ENCODE measurements at regions of chr5 and their contacts with region 1.

Region 1: DNA sequence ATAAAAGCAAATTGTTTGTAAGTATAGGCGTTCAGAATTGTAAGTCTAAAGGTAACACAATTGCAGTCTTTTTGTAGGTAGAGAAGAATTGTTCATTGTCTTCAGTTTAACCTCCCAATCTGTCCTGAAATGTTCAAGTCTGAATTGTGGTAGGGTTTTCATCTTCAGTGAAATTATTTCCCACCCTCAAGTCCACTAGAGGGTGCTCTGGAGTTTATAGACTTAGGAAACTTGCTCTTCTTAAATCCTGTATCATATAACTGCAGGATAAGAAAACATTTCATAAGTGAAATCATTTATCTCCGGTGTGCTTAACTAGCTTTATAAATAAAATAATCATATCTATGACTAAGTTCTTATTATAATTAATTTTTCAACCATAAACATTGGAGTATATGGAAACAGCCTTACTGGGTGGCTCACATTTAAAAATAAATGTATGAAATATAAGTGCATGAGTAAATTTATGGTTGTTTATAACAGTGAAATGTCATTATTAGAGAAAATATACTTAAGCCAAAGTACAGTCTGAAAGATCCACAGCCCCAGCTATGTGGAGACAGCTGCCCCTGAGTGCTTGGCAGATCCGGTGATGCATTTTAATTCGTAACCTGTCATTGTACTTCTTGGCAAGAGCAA is 182.4 kb upstream of the OTULINL start:
- DNase-seq: no peak
- H3K4me3 ChIP-seq: no peak overlapping the region
- H3K27ac ChIP-seq: peak overlapping the region; percentile 43
- H3K4me1 ChIP-seq: peaks cover 18% of the 10 kb centered on the region
- H3K27me3 ChIP-seq: no peaks in the 10 kb centered on the region
- CTCF ChIP-seq: peak; percentile 82

Region 2: DNA sequence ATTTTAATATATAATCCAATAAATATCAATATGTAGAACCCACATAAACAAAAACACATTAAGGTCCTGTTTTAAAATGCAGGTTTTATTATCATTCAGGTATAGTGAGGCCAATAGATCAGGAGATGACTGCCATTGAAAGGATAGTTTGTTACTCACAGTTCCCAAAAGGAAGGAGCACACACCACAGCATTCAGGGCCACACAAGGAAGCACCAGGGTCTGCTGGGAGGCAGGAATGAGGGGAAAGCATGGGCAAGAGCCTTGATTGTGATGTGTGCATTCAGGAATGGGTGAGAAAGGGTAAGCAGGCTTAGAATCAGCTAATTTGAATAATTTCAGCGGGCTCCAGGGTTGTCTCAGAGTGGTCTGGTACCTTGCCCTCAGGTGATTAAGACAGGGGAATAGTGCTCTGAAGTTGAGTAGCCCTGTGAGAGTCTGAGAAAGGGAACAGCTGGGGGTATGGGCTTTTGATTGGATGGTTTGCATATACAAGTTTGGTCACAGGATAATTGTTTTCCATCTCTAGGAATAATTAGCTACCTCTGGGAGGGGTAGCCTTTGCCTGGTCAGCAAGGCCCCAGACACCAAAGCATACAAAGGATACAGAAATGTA is 245.6 kb after region 1 on chr5:
- intact Hi-C with region 1: loop called (anchors 10 kb)
- DNase-seq: no peak
- H3K4me3 ChIP-seq: no peak overlapping the region
- H3K27ac ChIP-seq: no peak overlapping the region
- H3K4me1 ChIP-seq: no peaks in the 10 kb centered on the region
- H3K27me3 ChIP-seq: peaks cover 37% of the 10 kb centered on the region
- CTCF ChIP-seq: no peak

Region 3: DNA sequence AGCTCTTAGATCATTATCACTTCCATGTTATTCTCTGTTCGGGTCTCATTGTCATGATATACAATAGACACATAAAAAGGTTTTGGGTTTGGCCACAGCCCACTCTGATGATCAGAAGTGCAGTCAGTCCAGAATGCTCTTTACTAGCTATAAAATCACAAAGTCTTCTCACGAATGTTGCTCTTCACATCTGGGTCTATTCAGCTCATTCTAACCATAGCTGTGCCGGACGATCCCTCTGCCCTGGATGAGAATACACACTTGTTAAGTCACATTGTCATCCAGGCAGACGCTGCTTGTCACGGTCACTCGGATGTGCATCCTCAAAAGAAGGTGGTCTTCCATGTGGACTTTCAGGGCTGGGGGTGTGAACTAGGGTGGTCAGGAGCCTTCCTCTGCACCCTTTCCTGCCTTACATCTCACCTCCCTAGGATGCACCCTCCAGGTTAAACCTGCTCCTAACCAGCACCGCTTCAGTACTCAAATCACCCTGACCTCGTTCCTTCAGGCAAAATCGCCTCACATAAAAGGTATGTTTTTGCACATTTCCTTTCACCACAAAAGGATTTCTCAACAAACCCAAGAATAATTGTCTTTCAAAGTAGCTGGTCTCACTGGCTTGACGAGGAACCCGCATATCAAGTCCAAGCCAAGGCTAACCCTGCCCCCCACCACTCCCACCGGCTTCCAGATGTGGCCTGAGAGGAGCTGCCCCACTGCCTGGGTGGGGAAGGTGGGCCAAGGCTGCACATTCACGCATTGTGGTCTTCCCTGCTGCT is 450.5 kb after region 1 on chr5:
- intact Hi-C with region 1: no loop called
- DNase-seq: no peak
- H3K4me3 ChIP-seq: no peak overlapping the region
- H3K27ac ChIP-seq: no peak overlapping the region
- H3K4me1 ChIP-seq: peaks cover 44% of the 10 kb centered on the region
- H3K27me3 ChIP-seq: no peaks in the 10 kb centered on the region
- CTCF ChIP-seq: no peak